Cardiac septum (tissue), 1 donor: ENCODE measurements at regions of chr11 and their contacts with region 1.

Region 1: DNA sequence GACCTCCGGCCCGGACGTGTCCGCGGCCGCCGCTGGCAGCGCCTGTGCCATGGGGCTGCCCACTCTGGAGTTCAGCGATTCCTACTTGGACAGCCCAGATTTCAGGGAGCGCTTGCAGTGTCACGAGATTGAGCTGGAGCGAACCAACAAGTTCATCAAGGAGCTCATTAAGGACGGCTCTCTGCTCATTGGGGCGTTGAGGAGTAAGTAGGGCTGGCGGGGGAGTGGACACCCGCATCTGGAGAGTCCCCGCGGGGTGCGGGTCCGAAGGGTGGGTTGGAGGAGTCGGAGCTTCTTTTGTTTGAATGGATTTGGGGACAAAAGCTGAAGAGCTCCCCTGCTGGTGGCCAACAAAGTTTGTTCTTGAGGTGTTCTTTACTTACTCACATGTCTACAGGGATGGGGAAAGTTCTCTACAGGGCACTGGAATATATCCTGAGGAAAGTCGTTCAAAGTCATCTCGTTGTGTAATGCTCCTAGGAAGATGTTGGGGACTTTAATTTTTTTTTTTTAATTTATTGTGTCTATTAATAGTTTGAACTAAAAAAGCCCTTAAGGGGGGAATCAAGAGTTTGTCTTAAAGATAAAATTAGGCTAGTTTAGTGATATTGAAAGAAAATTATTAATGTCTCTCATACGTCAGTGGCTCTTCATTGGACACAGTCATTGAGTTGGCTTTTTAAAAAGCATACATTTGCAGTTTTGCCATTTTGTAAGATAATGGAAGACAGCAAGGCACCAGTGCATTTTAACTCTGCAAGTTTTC is 725 bp downstream of the ARHGAP42 start:
- DNase-seq: no peak

Region 2: DNA sequence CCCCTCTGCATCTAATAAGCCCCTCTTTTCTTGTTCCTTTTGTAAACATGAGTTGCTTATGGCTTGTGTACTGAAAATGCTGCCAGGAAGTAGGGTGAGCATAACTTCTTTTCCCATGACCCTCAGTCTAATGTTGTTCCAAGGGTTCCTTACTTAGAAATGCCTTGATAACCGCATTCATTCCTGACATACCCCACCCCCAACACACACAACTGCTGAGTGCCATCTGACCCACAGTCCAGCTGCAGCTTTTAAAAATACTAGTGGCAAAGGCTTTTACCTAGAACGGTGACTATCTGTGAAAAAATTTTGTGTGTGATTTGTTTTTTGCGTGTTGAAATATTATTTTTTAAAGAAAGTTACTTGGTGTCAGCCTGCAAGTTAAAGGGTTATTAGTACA is 51.9 kb after region 1 on chr11:
- intact Hi-C with region 1: loop called (anchors 5 kb)
- DNase-seq: no peak

Region 3: GRCh38 chr11:100841711-100842407 is 154.0 kb after region 1 on chr11:
- intact Hi-C with region 1: no loop called
- DNase-seq: no peak